ENCODE measurements at regions of chr9 and their contacts with region 1.

Region 1: DNA sequence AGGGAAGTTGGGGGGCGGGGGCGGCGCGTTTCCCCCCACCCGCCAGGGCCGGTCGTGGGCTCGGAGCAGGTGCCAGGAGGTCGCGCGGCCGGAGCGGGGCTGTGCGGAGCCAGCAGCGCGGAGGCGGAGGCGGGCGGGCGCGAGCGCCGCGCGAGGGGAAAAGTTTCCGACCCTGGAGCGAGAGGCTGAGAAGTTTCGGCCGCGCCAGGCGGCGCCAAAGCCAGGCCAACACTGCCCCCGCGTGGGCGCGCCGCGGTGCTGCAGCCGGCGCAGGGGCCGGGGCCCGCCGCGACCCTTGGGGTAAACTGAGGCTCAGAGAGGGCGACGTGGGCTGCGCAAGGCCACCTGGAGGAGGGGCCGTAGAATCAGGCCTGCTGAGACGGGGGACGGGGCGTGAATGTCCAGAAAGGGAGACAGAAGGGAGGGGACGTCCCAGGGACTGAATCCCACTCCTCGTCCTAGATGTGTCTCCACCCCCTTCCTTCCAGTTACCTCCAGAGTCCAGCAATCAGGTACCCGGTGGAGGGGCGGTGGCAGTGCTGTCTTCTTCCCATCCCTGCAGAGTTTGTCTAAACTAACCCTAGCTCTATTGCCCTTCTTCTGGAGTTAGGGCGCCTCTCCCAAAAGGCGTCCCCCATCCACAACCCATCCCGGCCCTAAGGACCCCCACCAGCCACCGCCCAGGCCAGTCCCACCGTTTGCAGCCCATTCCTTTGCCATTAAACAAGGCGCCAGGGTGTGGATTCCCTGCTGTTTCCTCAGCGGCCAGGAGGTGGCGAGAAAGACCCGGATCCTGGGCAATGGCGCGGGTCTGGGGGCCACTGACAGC is 10.2 kb downstream of the C9orf50 start:
- DNase-seq: peak; percentile 73 to 81 (median 76)
- ATAC-seq: peak; percentile 74
- H3K4me3 ChIP-seq: peak overlapping the region; percentile 64
- H3K27ac ChIP-seq: peak overlapping the region; percentile 74; the same call in 2 of the 3 replicates
- H3K4me1 ChIP-seq: peaks cover 11 to 68% of the 10 kb centered on the region in 2 experiments; a peak in 4 of 5 replicates
- H3K27me3 ChIP-seq: peaks cover 5 to 40% of the 10 kb centered on the region in 2 experiments; a peak in 4 of 5 replicates
- CTCF ChIP-seq: peak; percentile 74 to 94 (median 87)
- EP300 ChIP-seq: 0 out of 2 replicates have a peak, but pooled peaks have one; percentile 5
- POLR2A ChIP-seq: no peak
- RAD21 ChIP-seq: peak; percentile 98 to 99

Region 2: GRCh38 chr9:129139993-129140396 is 470.7 kb before region 1 on chr9:
- CTCF ChIA-PET with region 1: interaction called, 53 read pairs
- POLR2A ChIA-PET with region 1: interaction called, 6 read pairs
- in situ Hi-C with region 1: no loop called
- intact Hi-C with region 1: loop called (anchors 1 kb)
- DNase-seq: peak; percentile 61 to 94 (median 74)
- ATAC-seq: peak; percentile 86
- H3K4me3 ChIP-seq: peak overlapping the region; percentile 27
- H3K27ac ChIP-seq: peak overlapping the region; percentile 93
- H3K4me1 ChIP-seq: peaks cover 30 to 49% of the 10 kb centered on the region in 2 experiments
- H3K27me3 ChIP-seq: no peaks in the 10 kb centered on the region
- CTCF ChIP-seq: no peak
- EP300 ChIP-seq: peak; percentile 67
- POLR2A ChIP-seq: peak; percentile 55
- RAD21 ChIP-seq: no peak

Region 3: GRCh38 chr9:129177791-129178559 is 432.7 kb before region 1 on chr9 and contains the start of gene IER5L:
- CTCF ChIA-PET with region 1: interaction called, 17 read pairs
- POLR2A ChIA-PET with region 1: interaction called, 3 read pairs
- in situ Hi-C with region 1: no loop called
- intact Hi-C with region 1: loop called (anchors 2 kb)
- DNase-seq: peak; percentile 96 to 100 (median 100)
- ATAC-seq: peak; percentile 91
- H3K4me3 ChIP-seq: peak within 1 kb of the TSS; percentile 61
- H3K27ac ChIP-seq: peak within 1 kb of the TSS; percentile 49; the same call in 1 of the 3 replicates
- H3K4me1 ChIP-seq: peaks cover 19 to 64% of the 10 kb centered on the region in 2 experiments; a peak in 4 of 5 replicates
- H3K27me3 ChIP-seq: peaks cover 7 to 8% of the 10 kb centered on the region in 2 experiments; a peak in 3 of 5 replicates
- CTCF ChIP-seq: 0 out of 6 replicates have a peak, but pooled peaks of 1 of the 3 experiments have one; percentile 0
- EP300 ChIP-seq: no peak
- POLR2A ChIP-seq: peak; percentile 88
- RAD21 ChIP-seq: no peak; a peak in 1 of 4 replicates
- polyA plus RNA-seq, gene IER5L: 0.14 to 0.18 TPM

Region 4: GRCh38 chr9:129197978-129198318 is 412.7 kb before region 1 on chr9:
- CTCF ChIA-PET with region 1: no interaction called
- POLR2A ChIA-PET with region 1: no interaction called
- in situ Hi-C with region 1: no loop called
- intact Hi-C with region 1: no loop called
- DNase-seq: no peak
- ATAC-seq: no peak
- H3K4me3 ChIP-seq: no peak overlapping the region
- H3K27ac ChIP-seq: no peak overlapping the region
- H3K4me1 ChIP-seq: peaks cover 0 to 13% of the 10 kb centered on the region in 2 experiments; a peak in 3 of 5 replicates
- H3K27me3 ChIP-seq: peaks cover 3 to 16% of the 10 kb centered on the region in 2 experiments; a peak in 3 of 5 replicates
- CTCF ChIP-seq: no peak
- EP300 ChIP-seq: no peak
- POLR2A ChIP-seq: no peak
- RAD21 ChIP-seq: no peak

Region 5: DNA sequence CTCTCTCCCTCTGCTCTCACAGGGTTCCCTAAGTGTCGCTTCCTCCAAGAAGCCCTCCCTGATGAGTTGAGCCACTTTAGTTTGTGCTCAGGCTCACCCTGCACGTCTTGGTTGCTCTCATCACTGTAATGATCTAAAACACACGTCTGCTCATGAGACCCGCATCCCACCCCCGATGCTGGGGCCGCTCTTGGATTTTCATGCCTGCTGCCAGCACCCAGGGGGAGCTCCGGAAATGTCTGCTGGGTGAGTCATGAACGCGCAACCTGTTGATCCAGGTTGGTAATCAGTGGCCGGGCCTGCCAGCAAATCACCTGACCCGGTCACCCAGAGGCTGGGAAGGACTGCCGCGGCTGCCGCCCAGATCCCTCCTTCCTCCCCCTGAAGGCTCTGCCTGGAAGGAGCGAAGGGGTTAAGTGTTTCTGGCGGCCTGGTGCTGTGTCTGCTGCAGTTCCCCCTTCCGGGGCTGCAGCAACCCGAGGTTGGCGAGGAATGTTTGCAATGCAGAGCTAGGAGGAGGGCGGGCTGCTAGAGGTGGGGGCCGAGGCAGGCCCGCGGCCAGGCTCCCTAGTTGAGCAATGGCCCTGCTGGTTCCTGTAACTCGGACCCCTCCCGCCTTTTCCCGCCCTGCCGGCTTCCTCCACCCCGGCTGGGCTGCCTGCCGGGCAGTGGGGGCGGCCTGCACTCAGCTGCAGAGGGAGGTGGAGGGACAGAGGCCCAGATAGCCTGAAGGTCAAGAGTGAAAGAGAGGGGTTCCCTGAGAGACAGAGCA is 276.5 kb before region 1 on chr9:
- CTCF ChIA-PET with region 1: no interaction called
- POLR2A ChIA-PET with region 1: interaction called, 4 read pairs
- in situ Hi-C with region 1: loop called (anchors 25 kb)
- intact Hi-C with region 1: no loop called
- DNase-seq: peak; percentile 63 to 69 (median 66)
- ATAC-seq: peak; percentile 79
- H3K4me3 ChIP-seq: peak overlapping the region; percentile 10
- H3K27ac ChIP-seq: peak overlapping the region; percentile 63; the same call in 1 of the 3 replicates
- H3K4me1 ChIP-seq: peaks cover 14 to 32% of the 10 kb centered on the region in 2 experiments
- H3K27me3 ChIP-seq: no peaks in the 10 kb centered on the region
- CTCF ChIP-seq: 0 out of 6 replicates have a peak, but pooled peaks of 1 of the 3 experiments have one; percentile 3
- EP300 ChIP-seq: no peak; the same call in 1 of the 2 replicates
- POLR2A ChIP-seq: no peak
- RAD21 ChIP-seq: no peak

Region 6: GRCh38 chr9:129495534-129496325 is 115.0 kb before region 1 on chr9:
- CTCF ChIA-PET with region 1: no interaction called
- POLR2A ChIA-PET with region 1: interaction called, 4 read pairs
- in situ Hi-C with region 1: loop called (anchors 10 kb)
- intact Hi-C with region 1: no loop called
- DNase-seq: peak; percentile 92 to 98 (median 98)
- ATAC-seq: peak; percentile 83
- H3K4me3 ChIP-seq: peak overlapping the region; percentile 36
- H3K27ac ChIP-seq: peak overlapping the region; percentile 79
- H3K4me1 ChIP-seq: peaks cover 54 to 81% of the 10 kb centered on the region in 2 experiments
- H3K27me3 ChIP-seq: no peaks in the 10 kb centered on the region
- CTCF ChIP-seq: no peak
- EP300 ChIP-seq: no peak
- POLR2A ChIP-seq: peak; percentile 41; the same call in 1 of the 2 replicates
- RAD21 ChIP-seq: no peak

Region 7: GRCh38 chr9:129561594-129562281 is 48.9 kb before region 1 on chr9:
- CTCF ChIA-PET with region 1: no interaction called
- POLR2A ChIA-PET with region 1: interaction called, 5 read pairs
- in situ Hi-C with region 1: loop called (anchors 5 kb)
- intact Hi-C with region 1: loop called (anchors 10 kb)
- DNase-seq: no peak
- ATAC-seq: no peak
- H3K4me3 ChIP-seq: no peak overlapping the region
- H3K27ac ChIP-seq: no peak overlapping the region
- H3K4me1 ChIP-seq: peaks cover 0 to 37% of the 10 kb centered on the region in 2 experiments; a peak in 2 of 5 replicates
- H3K27me3 ChIP-seq: no peaks in the 10 kb centered on the region
- CTCF ChIP-seq: no peak
- EP300 ChIP-seq: no peak
- POLR2A ChIP-seq: no peak
- RAD21 ChIP-seq: no peak

Region 8: GRCh38 chr9:129626079-129626624 is 15.5 kb after region 1 on chr9 and contains the start of gene NTMT1:
- CTCF ChIA-PET with region 1: interaction called, 11 read pairs
- POLR2A ChIA-PET with region 1: interaction called, 6 read pairs
- in situ Hi-C with region 1: no loop called
- intact Hi-C with region 1: loop called (anchors 1 kb)
- DNase-seq: peak; percentile 89 to 93 (median 92)
- ATAC-seq: peak; percentile 83
- H3K4me3 ChIP-seq: peak within 1 kb of the TSS; percentile 67
- H3K27ac ChIP-seq: peak within 1 kb of the TSS; percentile 87
- H3K4me1 ChIP-seq: peaks cover 36 to 50% of the 10 kb centered on the region in 2 experiments
- H3K27me3 ChIP-seq: no peaks in the 10 kb centered on the region
- CTCF ChIP-seq: no peak
- EP300 ChIP-seq: 0 out of 2 replicates have a peak, but pooled peaks have one; percentile 8
- POLR2A ChIP-seq: peak; percentile 98
- RAD21 ChIP-seq: no peak
- polyA plus RNA-seq, gene NTMT1: 42.1 to 67.0 TPM

Measured in K562 (cell line).